ENCODE measurements at regions of chr1 and their contacts with region 1.

Region 1: GRCh38 chr1:150259758-150260669 is 2.4 kb downstream of the CA14 start:
- DNase-seq: no peak
- ATAC-seq: peak; percentile 78
- H3K4me3 ChIP-seq: peak overlapping the region; percentile 36 to 52
- H3K27ac ChIP-seq: peak overlapping the region; percentile 70
- H3K4me1 ChIP-seq: peaks cover 30 to 61% of the 10 kb centered on the region in 2 experiments
- H3K27me3 ChIP-seq: no peaks in the 10 kb centered on the region
- CTCF ChIP-seq: no peak
- POLR2A ChIP-seq: no peak
- RAD21 ChIP-seq: no peak

Region 2: GRCh38 chr1:150051089-150051373 is 209.0 kb before region 1 on chr1:
- CTCF ChIA-PET with region 1: no interaction called
- POLR2A ChIA-PET with region 1: no interaction called
- RAD21 ChIA-PET with region 1: no interaction called
- intact Hi-C with region 1: no loop called
- DNase-seq: no peak
- ATAC-seq: no peak
- H3K4me3 ChIP-seq: no peak overlapping the region
- H3K27ac ChIP-seq: no peak overlapping the region
- H3K4me1 ChIP-seq: peaks cover 0 to 16% of the 10 kb centered on the region in 2 experiments; a peak in 2 of 4 replicates
- H3K27me3 ChIP-seq: no peaks in the 10 kb centered on the region
- CTCF ChIP-seq: no peak
- POLR2A ChIP-seq: no peak
- RAD21 ChIP-seq: no peak

Region 3: GRCh38 chr1:150121236-150121862 is 138.7 kb before region 1 on chr1:
- CTCF ChIA-PET with region 1: no interaction called
- POLR2A ChIA-PET with region 1: no interaction called
- RAD21 ChIA-PET with region 1: no interaction called
- intact Hi-C with region 1: no loop called
- DNase-seq: no peak
- ATAC-seq: no peak
- H3K4me3 ChIP-seq: no peak overlapping the region
- H3K27ac ChIP-seq: no peak overlapping the region
- H3K4me1 ChIP-seq: peaks cover 0 to 5% of the 10 kb centered on the region in 2 experiments; a peak in 2 of 4 replicates
- H3K27me3 ChIP-seq: no peaks in the 10 kb centered on the region
- CTCF ChIP-seq: no peak
- POLR2A ChIP-seq: no peak
- RAD21 ChIP-seq: no peak

Region 4: GRCh38 chr1:150176593-150176992 is 83.4 kb before region 1 on chr1:
- CTCF ChIA-PET with region 1: no interaction called
- POLR2A ChIA-PET with region 1: no interaction called
- RAD21 ChIA-PET with region 1: no interaction called
- intact Hi-C with region 1: no loop called
- DNase-seq: no peak
- ATAC-seq: no peak
- H3K4me3 ChIP-seq: no peak overlapping the region
- H3K27ac ChIP-seq: no peak overlapping the region
- H3K4me1 ChIP-seq: no peaks in the 10 kb centered on the region
- H3K27me3 ChIP-seq: no peaks in the 10 kb centered on the region
- CTCF ChIP-seq: no peak
- POLR2A ChIP-seq: no peak
- RAD21 ChIP-seq: no peak

Region 5: DNA sequence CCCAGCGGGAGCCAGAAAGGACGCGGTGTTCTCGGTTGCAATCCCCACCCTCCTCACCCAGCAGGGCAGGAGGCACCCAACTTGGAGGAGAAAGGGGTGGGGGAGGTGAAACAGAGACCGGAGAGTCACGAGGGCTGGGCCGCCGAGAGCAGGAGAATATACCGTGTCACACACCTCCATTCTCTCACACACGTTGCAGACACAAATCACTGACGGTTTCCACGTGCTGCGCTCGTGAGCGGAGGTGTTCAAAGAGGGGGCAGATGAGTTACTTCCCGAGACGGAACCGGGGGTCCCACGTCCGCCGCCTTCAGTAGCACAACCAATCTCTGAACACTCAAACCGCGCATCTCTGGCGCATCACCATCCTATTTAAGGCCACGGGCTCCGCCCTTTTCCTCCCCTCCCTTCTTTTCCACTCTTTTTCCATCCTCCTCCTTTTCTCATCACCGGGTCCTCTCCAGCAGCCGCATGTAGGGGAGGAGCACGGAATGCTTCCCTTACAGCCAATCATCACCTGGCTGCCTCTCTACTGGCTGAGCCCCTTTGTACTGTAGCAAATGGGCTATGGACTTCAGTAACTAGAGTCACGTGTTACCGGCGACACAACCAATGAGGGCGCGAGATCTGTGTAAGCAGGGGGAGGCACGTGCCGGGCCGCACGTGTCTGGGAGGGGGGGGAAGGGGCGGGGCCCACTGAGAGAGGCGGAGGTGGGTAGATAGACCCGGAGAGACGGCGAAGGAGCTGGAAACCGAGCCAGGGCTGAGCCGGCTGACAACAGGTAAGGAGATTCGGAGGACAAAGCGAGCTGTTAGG is 22.0 kb after region 1 on chr1 and contains the start of gene CIART:
- CTCF ChIA-PET with region 1: interaction called, 18 read pairs
- POLR2A ChIA-PET with region 1: no interaction called
- RAD21 ChIA-PET with region 1: interaction called in 1 of 2 experiments, 6 read pairs
- intact Hi-C with region 1: loop called (anchors 1 kb)
- DNase-seq: no peak
- ATAC-seq: peak; percentile 67; the same call in 1 of the 2 replicates
- H3K4me3 ChIP-seq: no peak within 1 kb of the TSS
- H3K27ac ChIP-seq: no peak within 1 kb of the TSS
- H3K4me1 ChIP-seq: no peaks in the 10 kb centered on the region
- H3K27me3 ChIP-seq: peaks cover 6% of the 10 kb centered on the region; the same call in 1 of the 2 replicates
- CTCF ChIP-seq: no peak
- POLR2A ChIP-seq: no peak
- RAD21 ChIP-seq: no peak
- total RNA-seq, gene CIART: 0.22 TPM

Region 6: GRCh38 chr1:150321826-150322166 is 61.8 kb after region 1 on chr1:
- CTCF ChIA-PET with region 1: no interaction called
- POLR2A ChIA-PET with region 1: no interaction called
- RAD21 ChIA-PET with region 1: no interaction called
- intact Hi-C with region 1: loop called (anchors 5 kb)
- DNase-seq: no peak
- ATAC-seq: no peak; the same call in 1 of the 2 replicates
- H3K4me3 ChIP-seq: peak overlapping the region; percentile 79 to 92
- H3K27ac ChIP-seq: peak overlapping the region; percentile 49
- H3K4me1 ChIP-seq: peaks cover 4 to 11% of the 10 kb centered on the region in 2 experiments; a peak in 3 of 4 replicates
- H3K27me3 ChIP-seq: no peaks in the 10 kb centered on the region
- CTCF ChIP-seq: no peak
- POLR2A ChIP-seq: no peak
- RAD21 ChIP-seq: no peak

Region 7: DNA sequence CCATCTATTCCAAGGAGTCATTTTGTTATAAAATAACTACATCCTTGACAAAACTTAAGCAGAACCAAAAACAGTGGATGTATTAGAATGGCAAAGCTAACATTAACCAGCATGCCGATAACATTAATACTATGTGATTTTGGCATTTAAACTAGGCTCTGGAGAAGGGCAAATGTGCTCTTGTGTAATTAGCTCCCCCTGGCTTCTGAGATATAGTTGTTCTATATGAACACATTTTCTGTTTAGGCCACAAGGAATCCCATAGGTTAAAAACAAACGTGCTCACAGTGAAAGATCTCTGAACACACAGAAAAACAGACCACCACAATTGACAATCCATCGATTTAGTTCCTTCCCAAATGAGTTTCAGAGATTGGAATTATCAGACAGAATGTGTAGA is 169.8 kb after region 1 on chr1:
- CTCF ChIA-PET with region 1: no interaction called
- POLR2A ChIA-PET with region 1: no interaction called
- RAD21 ChIA-PET with region 1: no interaction called
- intact Hi-C with region 1: loop called (anchors 10 kb)
- DNase-seq: no peak
- ATAC-seq: no peak
- H3K4me3 ChIP-seq: no peak overlapping the region
- H3K27ac ChIP-seq: no peak overlapping the region
- H3K4me1 ChIP-seq: no peaks in the 10 kb centered on the region
- H3K27me3 ChIP-seq: no peaks in the 10 kb centered on the region
- CTCF ChIP-seq: peak in 1 of 3 experiments; percentile 10; a peak in 1 of 6 replicates
- POLR2A ChIP-seq: no peak
- RAD21 ChIP-seq: peak; percentile 31; the same call in 1 of the 2 replicates

Region 8: GRCh38 chr1:150532868-150533302 is 272.9 kb after region 1 on chr1:
- CTCF ChIA-PET with region 1: interaction called, 7 read pairs
- POLR2A ChIA-PET with region 1: interaction called, 3 read pairs
- RAD21 ChIA-PET with region 1: no interaction called
- intact Hi-C with region 1: loop called (anchors 5 kb)
- DNase-seq: no peak
- ATAC-seq: 0 out of 2 replicates have a peak, but pooled peaks have one; percentile 6
- H3K4me3 ChIP-seq: no peak overlapping the region
- H3K27ac ChIP-seq: no peak overlapping the region
- H3K4me1 ChIP-seq: peaks cover 6 to 35% of the 10 kb centered on the region in 2 experiments; a peak in 3 of 4 replicates
- H3K27me3 ChIP-seq: no peaks in the 10 kb centered on the region
- CTCF ChIP-seq: no peak; a peak in 1 of 6 replicates
- POLR2A ChIP-seq: no peak
- RAD21 ChIP-seq: no peak

Region 9: DNA sequence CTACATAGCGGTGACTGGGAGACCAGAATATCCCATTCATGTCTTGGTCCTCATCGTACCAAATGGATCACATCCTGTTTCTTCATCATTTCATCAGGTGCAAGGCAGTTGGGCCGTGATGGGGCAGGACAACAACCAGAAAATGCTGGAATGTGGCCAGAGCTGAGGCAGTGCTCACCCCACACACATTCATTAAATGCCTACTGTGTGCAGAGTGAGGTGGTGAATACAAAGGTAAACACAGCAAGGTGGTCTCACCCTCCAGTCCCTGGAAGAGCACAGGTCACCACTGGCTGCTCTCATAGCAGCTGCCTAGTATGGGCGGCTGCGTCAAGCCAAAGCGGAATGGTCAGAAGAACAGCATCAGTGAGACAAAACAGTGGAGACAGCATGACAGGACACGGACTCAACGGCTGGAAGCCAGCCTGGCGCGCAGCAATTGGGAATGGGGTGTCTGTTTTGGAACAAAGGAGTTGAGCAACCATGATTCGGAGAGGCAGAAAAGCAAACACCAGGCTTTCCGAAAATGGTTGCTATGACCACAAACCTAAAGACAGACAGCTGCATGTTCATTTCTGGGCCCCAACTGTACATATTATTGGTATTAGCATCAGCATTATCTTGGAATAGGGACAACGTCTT is 283.6 kb after region 1 on chr1:
- CTCF ChIA-PET with region 1: no interaction called
- POLR2A ChIA-PET with region 1: no interaction called
- RAD21 ChIA-PET with region 1: no interaction called
- intact Hi-C with region 1: no loop called
- DNase-seq: no peak
- ATAC-seq: no peak
- H3K4me3 ChIP-seq: no peak overlapping the region
- H3K27ac ChIP-seq: no peak overlapping the region
- H3K4me1 ChIP-seq: peaks cover 2 to 13% of the 10 kb centered on the region in 2 experiments; a peak in 3 of 4 replicates
- H3K27me3 ChIP-seq: no peaks in the 10 kb centered on the region
- CTCF ChIP-seq: no peak
- POLR2A ChIP-seq: no peak
- RAD21 ChIP-seq: no peak

Region 10: DNA sequence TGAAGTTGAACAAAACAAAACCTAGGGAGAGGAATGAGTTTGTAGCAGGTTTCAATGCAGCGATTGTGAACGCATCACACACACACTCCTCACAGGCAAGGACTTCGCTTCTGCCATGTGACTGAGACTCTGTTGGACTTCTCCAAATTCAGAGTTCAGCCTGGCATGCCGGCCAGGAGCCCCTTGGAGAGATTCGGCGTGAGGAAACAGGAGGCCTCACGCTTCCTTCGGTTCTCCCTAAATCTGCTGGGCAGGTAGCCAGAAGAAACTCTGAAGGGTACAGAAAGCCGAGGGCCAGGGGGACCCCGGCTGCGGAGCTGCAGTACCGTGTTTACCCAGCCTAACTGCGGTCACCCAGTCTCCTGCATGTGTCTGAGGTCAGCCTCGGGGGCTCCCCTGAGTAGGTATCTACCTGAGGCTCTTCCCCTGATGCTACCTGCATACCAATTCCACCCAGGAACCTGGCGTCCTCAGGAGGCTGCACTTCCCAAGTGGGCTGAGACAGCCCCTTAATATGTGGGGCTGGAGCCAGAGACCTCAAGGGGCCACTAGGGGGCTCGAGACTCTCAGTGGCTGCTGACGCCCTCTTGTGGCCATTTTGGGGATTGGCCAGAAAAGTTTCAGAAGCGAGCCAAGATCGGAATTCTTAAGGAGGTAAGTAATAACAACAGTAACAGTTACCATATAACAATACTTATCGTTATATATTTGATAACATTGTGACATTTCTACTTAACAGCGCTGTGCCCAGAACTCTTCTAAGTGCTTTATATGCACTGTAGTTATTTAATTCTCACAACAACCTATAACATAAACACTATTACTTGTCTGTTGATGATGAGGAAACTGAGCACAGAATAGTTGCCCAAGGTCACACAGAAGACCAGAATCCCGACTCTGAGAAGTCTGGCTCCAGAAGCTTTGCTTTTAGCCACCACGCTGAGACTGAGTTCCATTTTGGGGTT is 719.4 kb after region 1 on chr1:
- CTCF ChIA-PET with region 1: no interaction called
- POLR2A ChIA-PET with region 1: no interaction called
- RAD21 ChIA-PET with region 1: no interaction called
- intact Hi-C with region 1: loop called (anchors 5 kb)
- DNase-seq: peak; percentile 78
- ATAC-seq: peak; percentile 42
- H3K4me3 ChIP-seq: no peak overlapping the region
- H3K27ac ChIP-seq: peak overlapping the region; percentile 92
- H3K4me1 ChIP-seq: peaks cover 71 to 83% of the 10 kb centered on the region in 2 experiments
- H3K27me3 ChIP-seq: no peaks in the 10 kb centered on the region
- CTCF ChIP-seq: peak in 2 of 3 experiments; percentile 100; a peak in 4 of 6 replicates
- POLR2A ChIP-seq: no peak
- RAD21 ChIP-seq: no peak

Region 11: GRCh38 chr1:150995896-150996295 is 735.9 kb after region 1 on chr1:
- CTCF ChIA-PET with region 1: interaction called, 11 read pairs
- POLR2A ChIA-PET with region 1: no interaction called
- RAD21 ChIA-PET with region 1: no interaction called
- intact Hi-C with region 1: loop called (anchors 5 kb)
- DNase-seq: no peak
- ATAC-seq: peak; percentile 73
- H3K4me3 ChIP-seq: no peak overlapping the region
- H3K27ac ChIP-seq: no peak overlapping the region
- H3K4me1 ChIP-seq: peaks cover 6 to 37% of the 10 kb centered on the region in 2 experiments; a peak in 3 of 4 replicates
- H3K27me3 ChIP-seq: no peaks in the 10 kb centered on the region
- CTCF ChIP-seq: peak; percentile 61 to 85 (median 76); a peak in 5 of 6 replicates
- POLR2A ChIP-seq: no peak
- RAD21 ChIP-seq: peak; percentile 87